ENCODE measurements at regions of chr10 and their contacts with region 1.

Region 1: GRCh38 chr10:91389636-91390512 is 20.3 kb upstream of the HECTD2 start:
- DNase-seq: no peak
- ATAC-seq: peak; percentile 97
- H3K4me3 ChIP-seq: no peak overlapping the region
- H3K27ac ChIP-seq: no peak overlapping the region
- H3K4me1 ChIP-seq: no peaks in the 10 kb centered on the region
- H3K27me3 ChIP-seq: peaks cover 0 to 2% of the 10 kb centered on the region in 2 experiments; a peak in 1 of 4 replicates
- CTCF ChIP-seq: peak; percentile 40 to 51 (median 50); a peak in 5 of 6 replicates
- EP300 ChIP-seq: no peak
- POLR2A ChIP-seq: no peak
- RAD21 ChIP-seq: peak; percentile 59

Region 2: DNA sequence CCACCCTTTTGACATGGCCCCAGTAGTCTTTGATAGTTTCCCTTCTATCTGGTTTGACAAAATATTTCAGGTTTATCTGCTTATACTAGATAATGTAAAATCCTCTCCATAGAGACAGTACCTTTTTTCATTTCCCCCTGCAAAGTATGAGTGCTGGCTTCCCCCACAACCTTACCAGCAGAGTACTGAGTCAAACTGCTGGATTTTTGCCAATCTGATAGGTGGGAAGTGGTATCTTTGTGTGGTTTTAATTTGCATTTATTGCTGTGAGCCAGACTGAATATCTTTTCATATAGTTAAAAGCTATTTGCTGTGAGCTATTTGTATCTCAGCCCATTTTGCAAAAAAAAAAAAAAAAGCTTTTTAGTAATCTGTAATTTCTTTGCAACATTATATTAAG is 11.8 kb before region 1 on chr10:
- CTCF ChIA-PET with region 1: interaction called, 14 read pairs
- POLR2A ChIA-PET with region 1: no interaction called
- RAD21 ChIA-PET with region 1: interaction called, 3 read pairs
- SMC1A ChIA-PET with region 1: no interaction called
- in situ Hi-C with region 1: no loop called
- intact Hi-C with region 1: no loop called
- DNase-seq: no peak
- ATAC-seq: no peak
- H3K4me3 ChIP-seq: no peak overlapping the region
- H3K27ac ChIP-seq: no peak overlapping the region
- H3K4me1 ChIP-seq: no peaks in the 10 kb centered on the region
- H3K27me3 ChIP-seq: no peaks in the 10 kb centered on the region
- CTCF ChIP-seq: no peak
- EP300 ChIP-seq: no peak
- POLR2A ChIP-seq: no peak
- RAD21 ChIP-seq: no peak

Region 3: DNA sequence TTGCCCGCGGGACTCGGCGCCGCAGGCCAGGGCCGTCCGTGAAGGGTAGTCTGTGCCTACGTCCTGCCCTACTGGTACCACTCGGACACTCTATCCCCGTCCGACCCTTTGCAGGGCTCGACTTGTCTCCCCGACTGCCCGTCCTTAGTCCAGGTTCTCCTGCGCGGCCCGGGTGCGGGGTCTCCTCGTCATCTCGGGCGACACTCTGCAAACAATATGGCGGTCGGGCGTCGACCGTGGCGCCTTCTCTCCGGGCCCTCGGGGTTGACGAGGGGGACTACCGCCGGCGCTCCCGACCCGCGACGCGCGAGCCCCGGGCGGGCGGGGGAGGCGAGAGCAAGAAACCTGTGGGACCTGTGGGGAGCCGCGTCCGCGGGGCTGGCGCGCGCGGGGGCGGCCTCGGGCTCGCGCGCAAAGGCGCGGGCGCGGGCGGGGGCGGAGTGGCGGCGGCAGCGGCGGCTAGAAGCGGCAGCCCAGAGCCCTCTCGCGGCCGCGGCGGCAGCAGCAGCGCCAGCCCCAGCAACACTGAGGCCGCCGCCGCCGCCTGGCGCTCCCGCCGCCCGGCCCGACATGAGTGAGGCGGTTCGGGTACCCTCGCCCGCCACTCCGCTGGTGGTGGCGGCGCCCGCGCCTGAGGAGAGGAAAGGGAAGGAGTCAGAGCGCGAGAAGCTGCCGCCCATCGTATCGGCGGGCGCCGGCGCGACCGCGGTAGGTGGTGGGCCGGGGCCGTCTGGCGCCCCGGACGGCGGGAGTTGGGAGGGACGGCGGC is 20.2 kb after region 1 on chr10 and contains the start of gene HECTD2:
- CTCF ChIA-PET with region 1: interaction called, 7 read pairs
- POLR2A ChIA-PET with region 1: no interaction called
- RAD21 ChIA-PET with region 1: no interaction called
- SMC1A ChIA-PET with region 1: interaction called, 12 read pairs
- in situ Hi-C with region 1: no loop called
- intact Hi-C with region 1: no loop called
- DNase-seq: no peak
- ATAC-seq: peak; percentile 89
- H3K4me3 ChIP-seq: peak within 1 kb of the TSS; percentile 85
- H3K27ac ChIP-seq: peak within 1 kb of the TSS; percentile 81
- H3K4me1 ChIP-seq: no peaks in the 10 kb centered on the region
- H3K27me3 ChIP-seq: no peaks in the 10 kb centered on the region
- CTCF ChIP-seq: peak; percentile 11 to 55 (median 27); a peak in 3 of 6 replicates
- EP300 ChIP-seq: no peak
- POLR2A ChIP-seq: peak; percentile 80
- RAD21 ChIP-seq: peak; percentile 20; the same call in 1 of the 2 replicates
- polyA plus RNA-seq, gene HECTD2: 1.2 TPM

Region 4: DNA sequence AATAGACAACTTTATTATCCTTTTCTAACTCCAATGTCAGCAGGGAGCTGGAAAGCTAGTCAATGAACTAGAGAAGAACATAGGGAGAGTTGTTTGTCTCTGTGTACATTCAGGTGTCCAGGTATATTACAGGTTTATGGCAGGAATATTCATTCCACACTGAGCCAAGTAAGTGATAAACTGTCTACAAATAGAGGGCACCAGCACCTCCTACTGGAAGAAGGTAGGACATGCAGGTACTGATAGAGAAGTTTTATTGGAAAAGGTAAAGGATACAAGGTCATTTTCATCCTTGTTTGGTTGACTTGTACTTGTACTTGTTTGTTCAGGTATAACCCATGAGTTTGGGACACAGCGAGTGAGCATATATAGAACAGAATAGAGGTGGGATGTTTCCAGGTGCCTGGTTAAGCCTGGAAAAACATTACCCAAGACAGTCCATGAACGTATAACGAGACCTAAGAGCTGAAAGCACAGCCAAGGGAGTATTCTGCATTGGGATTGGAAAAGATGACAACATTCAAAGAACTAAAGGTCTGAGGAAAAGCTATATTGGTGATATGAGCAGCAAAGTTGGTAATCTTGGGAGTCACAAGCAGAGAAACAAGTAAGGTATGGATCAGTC is 304.4 kb after region 1 on chr10:
- CTCF ChIA-PET with region 1: no interaction called
- POLR2A ChIA-PET with region 1: no interaction called
- RAD21 ChIA-PET with region 1: no interaction called
- SMC1A ChIA-PET with region 1: interaction called, 4 read pairs
- in situ Hi-C with region 1: no loop called
- intact Hi-C with region 1: loop called (anchors 5 kb)
- DNase-seq: no peak
- ATAC-seq: no peak
- H3K4me3 ChIP-seq: no peak overlapping the region
- H3K27ac ChIP-seq: no peak overlapping the region
- H3K4me1 ChIP-seq: no peaks in the 10 kb centered on the region
- H3K27me3 ChIP-seq: no peaks in the 10 kb centered on the region
- CTCF ChIP-seq: peak; percentile 52 to 73 (median 57); a peak in 5 of 6 replicates
- EP300 ChIP-seq: no peak
- POLR2A ChIP-seq: no peak
- RAD21 ChIP-seq: peak; percentile 57

Measured in GM12878 (cell line).